ENCODE measurements at regions of chr1 and their contacts with region 1.

Region 1: DNA sequence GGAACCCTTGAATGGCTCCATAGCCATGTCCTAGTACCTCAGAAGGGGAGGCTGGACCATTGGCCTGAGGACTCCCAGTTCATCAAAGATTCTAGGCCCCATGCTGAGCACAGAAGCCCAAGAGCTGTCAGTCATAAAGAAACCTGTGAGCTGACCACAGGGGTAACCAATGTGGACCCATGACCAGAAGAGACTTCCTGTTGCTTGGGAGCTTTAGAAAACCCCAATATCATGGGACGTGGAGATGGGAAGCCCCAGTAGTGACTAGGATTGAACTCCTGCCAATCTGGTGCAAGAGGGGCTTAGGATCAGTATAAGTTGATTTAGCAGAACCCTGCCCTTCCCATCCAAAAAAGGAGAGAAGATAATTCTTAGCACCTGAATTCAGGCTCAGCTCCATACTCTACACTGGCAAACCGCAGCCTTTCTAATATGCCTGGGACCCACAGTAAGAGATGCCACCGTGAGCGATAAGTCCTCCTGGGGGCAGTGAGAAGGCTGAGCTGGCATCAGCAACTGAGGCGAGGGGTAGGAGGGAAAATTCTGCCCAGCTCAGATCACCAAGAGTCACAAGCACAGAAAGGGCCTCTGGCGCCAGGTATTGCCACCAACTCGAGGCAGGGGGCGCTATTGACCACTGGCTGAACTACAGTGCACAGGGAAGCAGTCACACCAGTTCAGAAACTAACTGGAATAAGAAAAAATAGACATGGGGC is 108.9 kb downstream of the CAPN8 start:
- DNase-seq: peak; percentile 59
- ATAC-seq: peak; percentile 88
- H3K4me3 ChIP-seq: no peak overlapping the region
- H3K27ac ChIP-seq: no peak overlapping the region
- H3K4me1 ChIP-seq: peaks cover 3% of the 10 kb centered on the region
- H3K27me3 ChIP-seq: no peaks in the 10 kb centered on the region
- CTCF ChIP-seq: peak; percentile 71 to 85 (median 83)
- EP300 ChIP-seq: peak in 1 of 2 experiments; percentile 79; a peak in 1 of 4 replicates
- POLR2A ChIP-seq: no peak
- RAD21 ChIP-seq: peak; percentile 78

Region 2: GRCh38 chr1:223109581-223110026 is 447.0 kb before region 1 on chr1:
- CTCF ChIA-PET with region 1: no interaction called
- POLR2A ChIA-PET with region 1: no interaction called
- RAD21 ChIA-PET with region 1: no interaction called
- SMC1A ChIA-PET with region 1: no interaction called
- in situ Hi-C with region 1: no loop called
- intact Hi-C with region 1: no loop called
- DNase-seq: no peak
- ATAC-seq: no peak
- H3K4me3 ChIP-seq: no peak overlapping the region
- H3K27ac ChIP-seq: no peak overlapping the region
- H3K4me1 ChIP-seq: no peaks in the 10 kb centered on the region
- H3K27me3 ChIP-seq: peaks cover 0 to 6% of the 10 kb centered on the region in 2 experiments; a peak in 3 of 4 replicates
- CTCF ChIP-seq: no peak
- EP300 ChIP-seq: no peak
- POLR2A ChIP-seq: no peak
- RAD21 ChIP-seq: no peak

Region 3: DNA sequence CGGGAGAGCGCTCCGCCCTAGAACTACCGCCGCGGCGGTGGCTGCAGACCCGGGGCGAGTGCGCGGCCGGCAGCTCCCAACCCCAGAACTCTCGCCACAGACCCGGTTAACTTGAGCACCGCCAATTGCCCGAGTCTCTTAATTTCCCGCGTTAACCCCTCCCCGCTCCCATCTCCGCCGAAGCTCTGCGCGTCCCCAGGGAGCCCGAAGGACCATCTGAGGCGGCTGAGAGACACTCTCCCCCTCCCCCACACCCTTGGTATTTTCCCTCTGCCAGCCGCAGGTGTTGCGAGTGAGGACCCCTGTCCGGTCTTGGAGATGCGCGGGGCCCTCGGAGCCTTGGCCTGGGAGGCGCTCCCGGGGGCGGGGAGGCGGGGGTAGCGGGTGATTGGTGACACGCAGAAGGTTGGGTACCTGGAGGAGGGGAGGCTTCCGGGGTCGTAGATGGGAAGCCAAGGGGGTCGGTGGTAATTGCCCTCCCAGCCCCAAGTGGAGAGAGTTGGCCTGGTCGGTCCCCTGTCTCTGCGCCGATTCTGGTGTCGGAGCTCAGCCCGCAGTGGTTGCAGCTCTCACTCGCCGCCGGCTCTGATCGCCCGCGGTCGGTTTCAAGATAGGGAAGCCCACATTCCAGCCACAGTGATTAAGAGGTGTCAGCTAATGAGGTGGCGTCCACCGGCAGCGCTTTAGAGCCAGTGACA is 191.7 kb before region 1 on chr1:
- CTCF ChIA-PET with region 1: no interaction called
- POLR2A ChIA-PET with region 1: no interaction called
- RAD21 ChIA-PET with region 1: no interaction called
- SMC1A ChIA-PET with region 1: no interaction called
- in situ Hi-C with region 1: no loop called
- intact Hi-C with region 1: no loop called
- DNase-seq: no peak
- ATAC-seq: peak; percentile 34; the same call in 2 of the 3 replicates
- H3K4me3 ChIP-seq: no peak overlapping the region
- H3K27ac ChIP-seq: no peak overlapping the region
- H3K4me1 ChIP-seq: no peaks in the 10 kb centered on the region
- H3K27me3 ChIP-seq: peaks cover 3 to 12% of the 10 kb centered on the region in 2 experiments
- CTCF ChIP-seq: no peak
- EP300 ChIP-seq: no peak
- POLR2A ChIP-seq: no peak
- RAD21 ChIP-seq: no peak

Region 4: DNA sequence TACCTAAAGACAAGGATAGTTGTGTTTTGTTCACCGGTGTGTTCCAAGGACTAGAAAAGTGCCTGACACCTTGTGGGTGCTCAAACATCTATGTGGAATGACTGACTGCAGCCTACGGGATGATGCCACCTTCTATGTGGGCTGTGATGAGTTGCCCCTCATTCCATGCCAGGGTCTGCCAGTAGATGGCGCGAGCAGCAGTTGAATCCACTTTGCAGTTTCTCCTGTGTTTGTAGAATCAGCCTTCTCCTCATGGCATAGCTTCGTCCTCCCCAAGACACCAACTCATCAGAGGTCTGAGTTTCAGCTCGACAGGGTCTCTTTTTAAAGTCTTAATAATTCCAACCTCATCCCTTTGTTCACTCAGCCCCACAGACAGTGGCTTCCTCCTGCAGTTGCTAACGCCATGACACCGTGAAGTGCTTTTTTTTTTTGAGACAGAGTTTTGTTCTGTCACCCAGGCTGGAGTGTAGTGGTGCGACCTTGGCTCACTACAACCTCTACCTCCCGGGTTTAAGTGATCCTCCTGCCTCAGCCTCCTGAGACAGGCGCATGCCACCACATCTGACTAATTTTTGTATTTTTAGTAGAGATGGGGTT is 24.7 kb before region 1 on chr1:
- CTCF ChIA-PET with region 1: interaction called, 73 read pairs
- POLR2A ChIA-PET with region 1: interaction called, 4 read pairs
- RAD21 ChIA-PET with region 1: interaction called, 41 read pairs
- SMC1A ChIA-PET with region 1: interaction called, 13 read pairs
- in situ Hi-C with region 1: no loop called
- intact Hi-C with region 1: no loop called
- DNase-seq: no peak
- ATAC-seq: peak; percentile 95
- H3K4me3 ChIP-seq: no peak overlapping the region
- H3K27ac ChIP-seq: no peak overlapping the region
- H3K4me1 ChIP-seq: no peaks in the 10 kb centered on the region
- H3K27me3 ChIP-seq: no peaks in the 10 kb centered on the region; a peak in 1 of 4 replicates
- CTCF ChIP-seq: peak; percentile 84 to 86 (median 84)
- EP300 ChIP-seq: no peak
- POLR2A ChIP-seq: no peak
- RAD21 ChIP-seq: peak; percentile 78

Region 5: GRCh38 chr1:223611936-223612335 is 55.4 kb after region 1 on chr1:
- CTCF ChIA-PET with region 1: interaction called, 160 read pairs
- POLR2A ChIA-PET with region 1: interaction called, 23 read pairs
- RAD21 ChIA-PET with region 1: interaction called, 46 read pairs
- SMC1A ChIA-PET with region 1: interaction called, 69 read pairs
- in situ Hi-C with region 1: no loop called
- intact Hi-C with region 1: no loop called
- DNase-seq: no peak
- ATAC-seq: no peak
- H3K4me3 ChIP-seq: no peak overlapping the region
- H3K27ac ChIP-seq: no peak overlapping the region
- H3K4me1 ChIP-seq: no peaks in the 10 kb centered on the region
- H3K27me3 ChIP-seq: peaks cover 0 to 3% of the 10 kb centered on the region in 2 experiments; a peak in 1 of 4 replicates
- CTCF ChIP-seq: no peak
- EP300 ChIP-seq: no peak
- POLR2A ChIP-seq: no peak
- RAD21 ChIP-seq: no peak

Region 6: GRCh38 chr1:223628233-223629125 is 71.9 kb after region 1 on chr1:
- CTCF ChIA-PET with region 1: interaction called, 87 read pairs
- POLR2A ChIA-PET with region 1: interaction called, 3 read pairs
- RAD21 ChIA-PET with region 1: interaction called, 45 read pairs
- SMC1A ChIA-PET with region 1: interaction called, 37 read pairs
- in situ Hi-C with region 1: no loop called
- intact Hi-C with region 1: no loop called
- DNase-seq: no peak
- ATAC-seq: peak; percentile 90
- H3K4me3 ChIP-seq: no peak overlapping the region
- H3K27ac ChIP-seq: no peak overlapping the region
- H3K4me1 ChIP-seq: no peaks in the 10 kb centered on the region
- H3K27me3 ChIP-seq: peaks cover 0 to 3% of the 10 kb centered on the region in 2 experiments; a peak in 1 of 4 replicates
- CTCF ChIP-seq: peak; percentile 67 to 78 (median 71)
- EP300 ChIP-seq: no peak
- POLR2A ChIP-seq: no peak
- RAD21 ChIP-seq: peak; percentile 58

Region 7: DNA sequence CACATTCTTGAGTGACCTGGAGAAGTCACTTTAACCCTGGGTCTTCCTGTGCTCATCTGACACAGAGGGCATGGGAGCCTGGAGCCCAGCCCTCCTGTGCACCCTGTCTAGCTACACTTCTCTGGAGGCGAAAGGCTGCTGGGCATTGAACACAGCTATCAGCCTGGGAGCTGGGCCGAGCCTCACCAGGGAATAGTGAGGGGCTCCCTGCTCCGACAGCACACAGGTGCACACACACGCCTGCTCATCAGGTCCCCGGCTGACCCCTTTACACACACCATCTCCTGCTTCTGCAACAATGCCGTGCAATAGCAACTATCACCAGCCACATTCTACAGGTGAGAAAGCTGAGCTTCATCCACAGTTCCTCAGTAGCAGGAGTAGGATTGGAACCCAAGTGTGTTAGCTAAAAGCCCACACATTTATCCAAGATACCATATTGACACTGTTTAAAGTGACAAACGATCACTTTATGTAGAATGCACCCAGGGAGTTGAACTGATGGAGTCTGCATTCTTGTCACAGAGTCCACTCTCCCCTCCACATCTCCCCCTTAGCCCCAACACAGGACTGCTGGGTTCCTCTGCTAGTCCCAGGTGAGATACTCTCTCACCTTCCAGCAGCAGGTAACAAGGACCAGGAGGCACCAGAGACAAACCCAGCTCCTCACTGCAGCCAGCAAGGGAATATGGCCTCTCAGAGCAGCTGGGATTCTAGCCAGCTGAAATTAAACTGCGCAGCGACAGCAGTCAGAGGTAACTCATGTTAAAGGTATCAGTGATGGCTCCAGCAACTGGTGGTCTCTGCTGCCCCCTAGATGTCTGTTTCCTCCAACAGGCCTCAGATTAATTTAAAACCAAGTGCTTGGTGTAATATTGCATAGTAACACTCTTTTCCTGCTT is 127.3 kb after region 1 on chr1:
- CTCF ChIA-PET with region 1: interaction called, 72 read pairs
- POLR2A ChIA-PET with region 1: no interaction called
- RAD21 ChIA-PET with region 1: interaction called, 13 read pairs
- SMC1A ChIA-PET with region 1: interaction called, 13 read pairs
- in situ Hi-C with region 1: no loop called
- intact Hi-C with region 1: no loop called
- DNase-seq: no peak
- ATAC-seq: peak; percentile 81
- H3K4me3 ChIP-seq: no peak overlapping the region
- H3K27ac ChIP-seq: no peak overlapping the region
- H3K4me1 ChIP-seq: no peaks in the 10 kb centered on the region
- H3K27me3 ChIP-seq: no peaks in the 10 kb centered on the region; a peak in 2 of 4 replicates
- CTCF ChIP-seq: peak; percentile 53 to 75 (median 67)
- EP300 ChIP-seq: no peak
- POLR2A ChIP-seq: no peak
- RAD21 ChIP-seq: peak; percentile 80

Region 8: DNA sequence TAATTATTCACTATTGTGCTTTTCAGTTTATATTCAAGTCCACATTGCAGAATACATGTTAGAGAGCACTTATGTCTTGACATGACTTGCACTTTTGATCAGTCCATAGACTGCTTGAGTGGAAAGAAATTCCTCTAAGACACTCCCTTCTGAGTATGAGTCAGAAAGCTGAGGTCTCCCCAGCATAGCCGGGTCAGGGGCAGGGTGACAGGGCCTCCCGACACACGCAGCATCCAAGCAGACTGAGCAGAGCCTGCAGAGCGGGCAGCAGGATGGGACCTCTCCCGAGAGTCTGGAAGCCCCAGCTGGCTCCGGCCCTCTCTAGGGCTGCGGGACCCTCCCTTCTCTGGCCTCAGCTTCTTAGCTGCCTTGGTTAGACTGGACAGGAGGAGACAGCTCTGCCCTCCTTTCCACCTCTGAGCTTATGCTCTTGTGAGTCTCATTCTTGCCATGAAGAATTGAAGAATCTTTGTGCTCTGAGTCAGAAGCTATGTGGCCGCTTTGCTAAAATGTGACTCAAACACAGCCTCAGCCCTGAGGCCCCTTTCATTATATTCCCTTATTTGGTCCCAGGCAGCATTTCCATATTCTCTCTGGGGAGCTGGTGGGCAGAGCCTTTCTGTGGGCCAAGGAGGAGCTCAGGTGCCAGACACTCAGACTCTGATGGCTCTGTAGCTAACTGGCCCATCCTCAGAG is 144.5 kb after region 1 on chr1:
- CTCF ChIA-PET with region 1: interaction called, 32 read pairs
- POLR2A ChIA-PET with region 1: no interaction called
- RAD21 ChIA-PET with region 1: interaction called, 17 read pairs
- SMC1A ChIA-PET with region 1: interaction called, 11 read pairs
- in situ Hi-C with region 1: no loop called
- intact Hi-C with region 1: no loop called
- DNase-seq: no peak
- ATAC-seq: no peak; the same call in 2 of the 3 replicates
- H3K4me3 ChIP-seq: no peak overlapping the region
- H3K27ac ChIP-seq: no peak overlapping the region
- H3K4me1 ChIP-seq: peaks cover 6% of the 10 kb centered on the region
- H3K27me3 ChIP-seq: no peaks in the 10 kb centered on the region
- CTCF ChIP-seq: no peak
- EP300 ChIP-seq: no peak
- POLR2A ChIP-seq: no peak
- RAD21 ChIP-seq: no peak

Measured in GM12878 (cell line).